BJ (cell line): ENCODE measurements at regions of chr14 and their contacts with region 1.

Region 1: GRCh38 chr14:24431569-24432258 is 2.0 kb downstream of the KHNYN start:
- DNase-seq: peak; percentile 40
- H3K4me3 ChIP-seq: peak overlapping the region; percentile 58
- H3K27me3 ChIP-seq: no peaks in the 10 kb centered on the region
- CTCF ChIP-seq: peak; percentile 96

Region 2: GRCh38 chr14:24241829-24242443 is 189.8 kb before region 1 on chr14:
- CTCF ChIA-PET with region 1: interaction called, 12 read pairs
- POLR2A ChIA-PET with region 1: no interaction called
- DNase-seq: no peak
- H3K4me3 ChIP-seq: peak overlapping the region; percentile 64
- H3K27me3 ChIP-seq: no peaks in the 10 kb centered on the region
- CTCF ChIP-seq: peak; percentile 70

Region 3: GRCh38 chr14:24317141-24317928 is 114.4 kb before region 1 on chr14:
- CTCF ChIA-PET with region 1: interaction called, 38 read pairs
- POLR2A ChIA-PET with region 1: no interaction called
- DNase-seq: no peak
- H3K4me3 ChIP-seq: no peak overlapping the region
- H3K27me3 ChIP-seq: no peaks in the 10 kb centered on the region; the same call in 1 of the 2 replicates
- CTCF ChIP-seq: no peak

Region 4: GRCh38 chr14:24366721-24367513 is 64.8 kb before region 1 on chr14:
- CTCF ChIA-PET with region 1: interaction called, 59 read pairs
- POLR2A ChIA-PET with region 1: interaction called, 9 read pairs
- DNase-seq: peak; percentile 80
- H3K4me3 ChIP-seq: peak overlapping the region; percentile 51
- H3K27me3 ChIP-seq: no peaks in the 10 kb centered on the region
- CTCF ChIP-seq: no peak

Region 5: DNA sequence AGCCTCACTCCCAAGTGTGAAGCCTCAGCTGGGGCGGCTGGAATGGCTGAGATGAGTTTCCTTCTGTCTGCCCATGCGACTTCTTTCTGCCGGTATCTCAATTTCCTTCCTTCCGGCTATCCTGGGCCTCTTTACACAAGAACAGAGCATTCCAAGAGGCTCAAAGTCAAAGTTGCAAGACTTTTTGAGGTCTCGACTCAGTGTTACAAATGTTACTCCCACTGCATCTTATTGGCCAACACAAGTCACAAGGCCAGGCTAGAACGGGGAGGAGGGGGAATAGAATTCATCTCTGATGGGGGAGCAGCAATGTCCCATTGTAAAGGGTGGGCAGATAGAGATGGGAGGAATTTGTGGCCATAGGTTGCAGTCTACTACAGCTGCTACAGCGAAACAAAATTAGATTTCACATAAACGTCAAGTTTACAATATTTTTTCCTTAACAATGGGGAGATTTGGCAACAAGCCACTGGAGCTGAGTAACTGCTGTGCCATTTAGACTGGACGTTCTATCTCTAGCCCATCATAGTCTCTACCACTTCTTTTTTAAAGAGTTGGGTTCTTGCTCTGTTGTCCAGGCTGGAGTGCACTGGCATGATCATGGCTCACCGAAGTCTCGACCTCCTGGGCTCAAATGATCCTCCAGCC is 42.4 kb before region 1 on chr14:
- CTCF ChIA-PET with region 1: interaction called, 10 read pairs
- POLR2A ChIA-PET with region 1: no interaction called
- DNase-seq: no peak
- H3K4me3 ChIP-seq: no peak overlapping the region
- H3K27me3 ChIP-seq: peaks cover 3% of the 10 kb centered on the region
- CTCF ChIP-seq: no peak

Region 6: DNA sequence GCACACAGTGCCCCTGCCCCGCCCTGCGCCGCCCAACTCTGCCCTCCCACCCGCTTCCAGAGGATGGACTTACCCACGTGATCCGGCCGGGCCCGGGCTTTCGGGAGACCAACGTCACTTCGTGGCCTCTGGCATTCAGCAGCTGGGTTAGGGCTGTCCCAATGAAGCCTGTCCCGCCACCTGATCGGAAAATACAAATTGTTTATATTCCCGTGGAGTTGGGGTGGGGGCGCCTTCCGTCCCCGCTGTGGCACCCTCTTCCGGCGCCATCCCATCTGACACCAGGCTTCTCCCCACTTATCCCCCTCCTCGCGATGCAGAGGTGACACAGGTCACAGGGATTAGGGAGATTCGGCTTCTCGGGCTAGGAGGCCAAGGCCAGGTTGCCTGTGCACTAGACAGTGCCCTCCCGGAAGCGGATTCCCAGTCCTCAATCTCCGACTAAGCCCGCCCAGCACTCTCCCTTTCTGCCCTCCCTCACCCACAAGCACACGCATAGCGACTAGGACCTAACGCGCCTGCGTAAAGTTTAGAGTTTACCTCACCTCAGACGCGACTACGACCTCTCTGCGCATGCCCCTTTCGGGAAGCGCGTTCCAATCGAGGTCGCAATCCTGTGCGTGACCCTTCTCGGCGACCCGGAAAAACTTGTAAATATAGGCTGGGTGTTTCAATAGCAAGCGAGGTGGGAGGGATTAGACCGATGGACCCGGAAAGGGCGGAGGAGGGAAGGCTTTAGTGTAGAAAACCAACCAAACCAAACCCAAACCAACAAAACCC is 10.7 kb after region 1 on chr14 and contains the start of gene SDR39U1:
- CTCF ChIA-PET with region 1: interaction called, 42 read pairs
- POLR2A ChIA-PET with region 1: interaction called, 7 read pairs
- DNase-seq: peak; percentile 98
- H3K4me3 ChIP-seq: peak within 1 kb of the TSS; percentile 60
- H3K27me3 ChIP-seq: no peaks in the 10 kb centered on the region
- CTCF ChIP-seq: no peak
- polyA plus RNA-seq, gene SDR39U1: 28.9 and 43.4 TPM in 2 replicates